PC-9 (cell line): ENCODE measurements at regions of chr7 and their contacts with region 1.

Region 1: GRCh38 chr7:124918662-124919061 is 11.0 kb downstream of the POT1 start:
- DNase-seq: no peak
- H3K4me3 ChIP-seq: no peak overlapping the region
- H3K27ac ChIP-seq: no peak overlapping the region
- H3K4me1 ChIP-seq: peaks cover 7% of the 10 kb centered on the region
- H3K27me3 ChIP-seq: no peaks in the 10 kb centered on the region
- CTCF ChIP-seq: no peak

Region 2: GRCh38 chr7:124881981-124882380 is 36.7 kb before region 1 on chr7:
- CTCF ChIA-PET with region 1: no interaction called
- POLR2A ChIA-PET with region 1: interaction called, 27 read pairs
- intact Hi-C with region 1: no loop called
- DNase-seq: no peak
- H3K4me3 ChIP-seq: no peak overlapping the region
- H3K27ac ChIP-seq: no peak overlapping the region
- H3K4me1 ChIP-seq: no peaks in the 10 kb centered on the region
- H3K27me3 ChIP-seq: no peaks in the 10 kb centered on the region
- CTCF ChIP-seq: no peak

Region 3: DNA sequence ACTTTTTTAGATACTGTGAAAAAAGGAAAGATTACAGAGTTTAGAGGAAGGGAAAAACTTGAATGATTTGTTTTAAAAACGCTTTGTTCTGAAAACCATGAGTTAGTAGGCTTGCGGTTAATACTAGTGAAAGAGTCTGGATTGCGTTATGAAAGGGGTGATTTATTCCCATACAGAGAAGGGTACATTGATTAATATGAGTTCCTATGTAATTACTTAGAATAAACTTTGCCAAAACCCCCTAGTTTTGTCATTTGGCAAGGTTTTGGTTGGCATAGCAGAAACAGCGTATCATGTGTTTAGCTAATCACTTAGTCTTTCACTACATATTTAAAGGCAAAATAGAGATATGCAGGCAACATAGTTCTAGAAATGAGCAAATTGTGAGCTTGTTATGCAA is 102.1 kb after region 1 on chr7:
- CTCF ChIA-PET with region 1: no interaction called
- POLR2A ChIA-PET with region 1: no interaction called
- intact Hi-C with region 1: no loop called
- DNase-seq: no peak
- H3K4me3 ChIP-seq: no peak overlapping the region
- H3K27ac ChIP-seq: no peak overlapping the region
- H3K4me1 ChIP-seq: no peaks in the 10 kb centered on the region
- H3K27me3 ChIP-seq: no peaks in the 10 kb centered on the region
- CTCF ChIP-seq: no peak